ENCODE measurements at regions of chr2 and their contacts with region 1.

Region 1: DNA sequence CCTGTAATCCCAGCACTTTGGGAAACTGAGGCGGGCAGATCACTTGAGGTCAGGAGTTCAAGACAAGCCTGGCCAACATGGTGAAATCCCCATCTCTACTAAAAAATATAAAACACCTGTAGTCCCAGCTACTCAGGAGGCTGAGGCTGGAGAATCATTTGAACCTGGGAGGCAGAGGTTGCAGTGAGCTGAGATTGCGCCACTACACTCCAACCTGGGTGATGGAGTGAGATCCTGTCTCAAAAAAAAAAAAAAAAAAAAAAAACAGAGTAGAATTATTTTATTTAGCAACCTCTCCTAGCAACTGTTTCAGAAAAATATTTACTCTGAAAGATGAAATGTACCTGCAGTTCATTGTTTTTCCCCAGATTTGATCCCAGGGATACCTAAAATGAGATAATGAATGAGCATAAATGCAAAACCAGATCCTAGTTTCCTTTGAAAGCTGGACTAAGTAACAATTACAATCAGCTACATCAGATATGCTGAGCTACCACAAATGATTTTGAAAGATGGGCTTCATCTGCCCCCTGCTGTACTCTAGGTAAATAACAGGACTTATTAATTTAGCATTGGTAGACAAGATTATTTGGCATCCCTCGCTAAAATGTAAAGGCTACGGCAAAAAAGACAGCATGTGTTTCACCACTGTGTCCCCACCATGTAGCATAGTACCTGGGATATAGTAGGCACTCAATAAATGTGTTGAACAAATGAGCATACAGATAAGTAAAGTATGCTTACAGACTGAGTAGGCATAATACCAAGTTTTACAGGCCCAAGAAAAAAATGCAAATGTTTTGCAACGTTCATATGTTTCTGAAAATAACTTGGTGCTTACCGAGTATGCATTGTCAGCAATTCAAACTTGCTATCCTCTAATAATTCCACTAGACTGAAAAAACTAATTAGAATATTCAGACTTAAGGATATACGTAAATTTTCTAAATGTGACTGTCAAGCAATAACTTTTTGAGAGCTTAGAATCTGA is 102.5 kb downstream of the ATL2 start:
- DNase-seq: peak; percentile 54
- H3K4me3 ChIP-seq: no peak overlapping the region
- H3K27ac ChIP-seq: no peak overlapping the region
- H3K4me1 ChIP-seq: no peaks in the 10 kb centered on the region
- H3K27me3 ChIP-seq: no peaks in the 10 kb centered on the region
- CTCF ChIP-seq: peak; percentile 62 to 88 (median 87)
- POLR2A ChIP-seq: no peak

Region 2: DNA sequence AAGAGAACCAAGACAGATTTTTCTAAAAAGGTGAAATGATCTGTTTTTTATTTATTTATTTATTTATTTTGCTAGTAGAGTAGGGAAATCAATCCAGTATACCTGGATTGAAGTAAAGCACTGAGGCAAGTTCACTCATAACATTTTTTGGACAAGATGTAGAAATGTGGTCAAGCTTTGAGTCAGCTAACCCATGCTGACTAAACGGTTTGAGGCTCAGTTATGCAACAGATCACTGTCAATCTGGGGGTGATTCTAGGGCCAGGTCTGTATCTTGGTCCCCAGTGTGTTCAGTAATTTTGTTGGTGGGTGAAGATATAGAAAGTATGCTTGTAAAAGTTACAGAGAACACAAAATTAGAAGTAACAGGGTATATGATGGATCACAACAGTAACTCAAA is 289.2 kb before region 1 on chr2:
- intact Hi-C with region 1: loop called (anchors 5 kb)
- DNase-seq: no peak
- H3K4me3 ChIP-seq: no peak overlapping the region
- H3K27ac ChIP-seq: no peak overlapping the region
- H3K4me1 ChIP-seq: no peaks in the 10 kb centered on the region
- H3K27me3 ChIP-seq: no peaks in the 10 kb centered on the region
- CTCF ChIP-seq: no peak
- POLR2A ChIP-seq: no peak

Region 3: GRCh38 chr2:38076606-38077430 is 197.8 kb before region 1 on chr2:
- intact Hi-C with region 1: loop called (anchors 10 kb)
- DNase-seq: peak; percentile 84
- H3K4me3 ChIP-seq: peak overlapping the region; percentile 63 to 69
- H3K27ac ChIP-seq: peak overlapping the region; percentile 83 to 88
- H3K4me1 ChIP-seq: peaks cover 23% of the 10 kb centered on the region
- H3K27me3 ChIP-seq: no peaks in the 10 kb centered on the region
- CTCF ChIP-seq: peak in 2 of 3 experiments; percentile 26 to 30
- POLR2A ChIP-seq: no peak

Region 4: DNA sequence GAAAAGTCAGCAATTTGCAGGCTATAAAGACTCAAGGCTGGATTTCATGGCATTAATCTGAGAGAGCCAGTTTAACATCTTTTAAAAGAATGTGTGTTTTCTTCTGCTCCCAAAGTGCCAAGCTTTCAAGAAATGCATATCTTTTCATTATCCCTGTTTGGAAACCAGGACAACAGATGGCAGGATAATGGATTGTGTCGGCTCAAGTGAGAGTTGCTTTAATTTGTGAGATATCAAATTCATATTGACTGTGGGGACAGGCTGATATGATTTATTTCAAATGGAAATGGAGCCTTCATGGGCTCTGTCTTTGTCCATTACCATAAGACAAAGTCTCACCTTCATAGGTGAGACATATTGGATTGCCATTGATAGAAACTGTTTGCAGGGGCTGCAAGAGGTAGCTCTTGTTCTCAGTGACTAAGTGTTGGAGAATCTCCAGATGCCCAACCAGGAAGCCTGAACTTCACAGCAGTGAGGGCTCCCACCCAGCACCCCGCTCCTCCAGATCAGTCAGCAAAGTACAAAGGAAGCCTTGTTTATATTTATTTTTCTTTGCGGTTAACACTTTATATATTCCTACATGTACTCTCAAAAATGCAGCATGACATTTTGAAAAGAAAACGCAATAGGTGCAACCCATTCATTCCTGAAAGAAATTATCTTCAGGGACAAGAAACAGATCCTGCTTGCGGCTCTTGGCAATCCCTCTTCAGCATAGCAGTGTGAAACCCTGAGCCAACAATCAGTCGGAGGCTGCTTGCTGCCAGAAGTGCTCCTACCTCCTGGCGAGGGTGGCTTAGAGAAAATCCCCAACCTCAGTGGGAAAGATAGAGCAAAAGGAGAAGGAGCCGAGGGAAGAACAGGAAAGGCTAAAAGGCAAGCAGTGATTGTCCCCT is 168.3 kb after region 1 on chr2:
- intact Hi-C with region 1: no loop called
- DNase-seq: peak; percentile 37
- H3K4me3 ChIP-seq: no peak overlapping the region
- H3K27ac ChIP-seq: no peak overlapping the region
- H3K4me1 ChIP-seq: peaks cover 17% of the 10 kb centered on the region
- H3K27me3 ChIP-seq: no peaks in the 10 kb centered on the region
- CTCF ChIP-seq: no peak
- POLR2A ChIP-seq: no peak